ENCODE measurements at regions of chr10 and their contacts with region 1.

Region 1: GRCh38 chr10:79068562-79069324 is at the start of gene ZMIZ1:
- DNase-seq: peak; percentile 100
- ATAC-seq: peak; percentile 47
- H3K4me3 ChIP-seq: peak within 1 kb of the TSS; percentile 66
- H3K27ac ChIP-seq: peak within 1 kb of the TSS; percentile 3
- H3K4me1 ChIP-seq: peaks cover 34% of the 10 kb centered on the region
- H3K27me3 ChIP-seq: no peaks in the 10 kb centered on the region
- CTCF ChIP-seq: peak; percentile 57
- total RNA-seq, gene ZMIZ1: 55.4 and 84.2 TPM in 2 replicates

Region 2: GRCh38 chr10:78458983-78459638 is 609.6 kb before region 1 on chr10:
- CTCF ChIA-PET with region 1: no interaction called
- POLR2A ChIA-PET with region 1: no interaction called
- intact Hi-C with region 1: loop called (anchors 2 kb)
- DNase-seq: peak; percentile 100
- ATAC-seq: peak; percentile 91
- H3K4me3 ChIP-seq: peak overlapping the region; percentile 6; the same call in 1 of the 2 replicates
- H3K27ac ChIP-seq: peak overlapping the region; percentile 85
- H3K4me1 ChIP-seq: peaks cover 57% of the 10 kb centered on the region
- H3K27me3 ChIP-seq: no peaks in the 10 kb centered on the region
- CTCF ChIP-seq: no peak

Region 3: DNA sequence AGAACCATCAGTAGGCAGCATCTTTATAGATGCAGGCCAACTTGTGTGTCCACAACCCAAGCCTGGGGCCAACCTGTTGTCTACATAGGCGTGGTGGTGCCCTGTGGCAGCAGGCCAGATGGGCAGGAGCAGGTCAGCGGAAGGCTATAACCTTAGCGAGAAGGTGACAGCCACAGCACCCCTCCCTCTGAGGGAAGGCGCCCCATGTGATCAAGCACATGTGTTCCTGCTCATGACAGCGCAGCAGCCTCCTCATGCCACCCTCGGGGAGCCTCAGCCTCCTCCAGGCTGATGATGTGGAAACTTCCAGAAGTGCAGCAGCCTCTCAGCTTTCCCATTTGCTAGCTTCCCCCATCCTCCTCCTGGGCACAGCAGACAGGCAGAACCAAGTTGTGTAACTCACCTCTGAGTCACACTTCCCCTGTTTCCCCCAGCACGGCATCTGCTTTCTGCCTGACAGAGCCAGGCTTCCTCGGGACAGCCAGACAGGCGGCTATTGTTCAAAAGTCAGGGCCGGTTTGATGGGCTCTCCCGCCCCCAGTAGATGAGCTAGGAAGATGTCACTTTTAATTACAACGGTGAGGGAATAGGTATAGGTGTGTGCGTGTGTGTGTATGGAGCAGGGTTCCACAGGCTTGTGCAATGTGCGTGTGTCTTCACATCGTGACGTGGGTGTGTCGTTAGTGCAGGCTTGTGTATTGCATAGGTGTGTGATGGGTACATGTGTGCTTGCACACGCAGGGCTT is 312.0 kb before region 1 on chr10:
- CTCF ChIA-PET with region 1: interaction called, 3 read pairs
- POLR2A ChIA-PET with region 1: no interaction called
- intact Hi-C with region 1: loop called (anchors 1 kb)
- DNase-seq: peak; percentile 100
- ATAC-seq: peak; percentile 98
- H3K4me3 ChIP-seq: peak overlapping the region; percentile 4; the same call in 1 of the 2 replicates
- H3K27ac ChIP-seq: peak overlapping the region; percentile 73
- H3K4me1 ChIP-seq: peaks cover 28% of the 10 kb centered on the region
- H3K27me3 ChIP-seq: no peaks in the 10 kb centered on the region
- CTCF ChIP-seq: peak; percentile 39; the same call in 1 of the 2 replicates

Region 4: GRCh38 chr10:78944723-78945312 is 123.9 kb before region 1 on chr10:
- CTCF ChIA-PET with region 1: no interaction called
- POLR2A ChIA-PET with region 1: no interaction called
- intact Hi-C with region 1: no loop called
- DNase-seq: peak; percentile 77
- ATAC-seq: peak; percentile 53
- H3K4me3 ChIP-seq: no peak overlapping the region
- H3K27ac ChIP-seq: no peak overlapping the region
- H3K4me1 ChIP-seq: no peaks in the 10 kb centered on the region
- H3K27me3 ChIP-seq: no peaks in the 10 kb centered on the region
- CTCF ChIP-seq: no peak

Region 5: GRCh38 chr10:78972947-78973900 is 95.5 kb before region 1 on chr10:
- CTCF ChIA-PET with region 1: interaction called, 36 read pairs
- POLR2A ChIA-PET with region 1: interaction called, 17 read pairs
- intact Hi-C with region 1: loop called (anchors 1 kb)
- DNase-seq: peak; percentile 100
- ATAC-seq: peak; percentile 63
- H3K4me3 ChIP-seq: peak overlapping the region; percentile 60
- H3K27ac ChIP-seq: peak overlapping the region; percentile 79
- H3K4me1 ChIP-seq: peaks cover 39% of the 10 kb centered on the region
- H3K27me3 ChIP-seq: no peaks in the 10 kb centered on the region
- CTCF ChIP-seq: peak; percentile 20; the same call in 1 of the 2 replicates

Region 6: DNA sequence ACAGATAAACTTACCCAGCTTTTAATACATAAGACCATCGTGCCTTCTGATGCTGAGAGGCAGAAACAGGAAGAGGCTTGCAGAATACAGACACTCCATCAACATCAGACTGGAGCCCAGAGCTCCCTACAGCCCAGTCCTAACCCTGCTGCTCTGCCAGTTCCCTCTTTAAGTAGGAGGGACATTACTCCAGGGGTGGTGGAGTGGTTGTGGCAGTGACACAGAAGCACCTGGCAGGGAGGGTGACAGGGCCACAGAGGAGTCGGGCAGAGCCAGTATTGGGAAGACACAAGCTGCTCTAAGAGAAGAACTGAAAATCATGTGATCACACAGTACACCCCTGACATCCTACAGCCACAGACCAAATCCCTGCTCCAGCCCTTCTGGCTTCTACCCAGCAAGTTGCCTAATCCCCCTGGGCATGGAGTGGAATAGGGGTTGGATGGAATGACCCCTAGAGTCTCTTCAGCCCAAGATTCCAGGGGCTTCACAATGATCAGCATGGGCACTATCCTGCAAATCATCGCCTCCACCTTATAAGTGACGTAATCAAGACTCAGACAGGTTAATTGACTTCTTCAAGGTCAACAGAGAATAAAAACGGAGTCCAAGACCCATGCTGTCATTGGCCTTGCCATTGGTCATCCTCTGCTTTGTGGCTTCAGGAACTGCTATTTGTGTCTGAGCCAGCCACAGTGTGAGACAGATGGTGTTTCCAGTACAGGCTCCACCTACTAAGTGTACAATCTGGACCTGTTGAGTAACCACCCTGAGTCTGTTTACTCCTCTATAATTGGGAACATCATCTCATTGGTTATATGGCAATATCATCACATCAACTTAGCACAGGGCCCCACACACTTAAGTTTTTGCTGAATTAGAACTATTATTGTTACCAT is 61.1 kb before region 1 on chr10:
- CTCF ChIA-PET with region 1: no interaction called
- POLR2A ChIA-PET with region 1: no interaction called
- intact Hi-C with region 1: no loop called
- DNase-seq: no peak
- ATAC-seq: no peak
- H3K4me3 ChIP-seq: no peak overlapping the region
- H3K27ac ChIP-seq: no peak overlapping the region
- H3K4me1 ChIP-seq: no peaks in the 10 kb centered on the region
- H3K27me3 ChIP-seq: peaks cover 40% of the 10 kb centered on the region
- CTCF ChIP-seq: no peak

Region 7: DNA sequence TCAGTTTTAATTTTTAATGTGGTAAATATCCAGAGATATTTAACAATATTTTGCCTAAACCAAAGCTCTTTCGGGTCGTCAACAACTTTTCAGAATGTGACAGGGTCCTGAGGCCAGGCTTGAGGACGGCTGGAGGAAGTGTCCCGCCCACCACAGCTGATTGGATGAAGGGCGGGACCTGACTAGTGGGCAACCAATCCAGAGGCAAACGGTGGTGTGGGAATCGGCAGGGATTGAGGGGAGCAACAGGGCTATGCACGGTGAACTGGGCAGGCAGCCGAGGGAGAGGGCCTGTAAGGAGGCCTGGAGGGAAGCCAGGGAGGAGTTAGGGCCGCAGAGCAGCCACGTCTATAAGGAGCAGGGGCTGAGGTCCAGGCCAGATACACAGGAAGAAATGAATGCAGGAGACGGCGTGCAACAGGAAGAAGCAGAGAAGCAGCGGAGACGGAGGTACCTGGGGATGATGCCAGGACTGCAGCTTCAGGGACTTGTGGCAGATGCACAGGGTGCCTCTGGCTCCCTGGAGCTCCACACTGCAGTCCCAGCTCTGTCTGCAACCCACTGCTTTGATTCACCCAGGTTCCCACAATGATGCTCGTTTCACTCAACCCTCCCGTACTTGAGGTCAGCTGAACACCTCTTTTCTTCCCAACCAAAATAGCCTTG is 46.0 kb before region 1 on chr10:
- CTCF ChIA-PET with region 1: no interaction called
- POLR2A ChIA-PET with region 1: no interaction called
- intact Hi-C with region 1: no loop called
- DNase-seq: peak; percentile 63
- ATAC-seq: peak; percentile 46; the same call in 1 of the 2 replicates
- H3K4me3 ChIP-seq: no peak overlapping the region
- H3K27ac ChIP-seq: no peak overlapping the region
- H3K4me1 ChIP-seq: no peaks in the 10 kb centered on the region
- H3K27me3 ChIP-seq: no peaks in the 10 kb centered on the region
- CTCF ChIP-seq: no peak

Region 8: DNA sequence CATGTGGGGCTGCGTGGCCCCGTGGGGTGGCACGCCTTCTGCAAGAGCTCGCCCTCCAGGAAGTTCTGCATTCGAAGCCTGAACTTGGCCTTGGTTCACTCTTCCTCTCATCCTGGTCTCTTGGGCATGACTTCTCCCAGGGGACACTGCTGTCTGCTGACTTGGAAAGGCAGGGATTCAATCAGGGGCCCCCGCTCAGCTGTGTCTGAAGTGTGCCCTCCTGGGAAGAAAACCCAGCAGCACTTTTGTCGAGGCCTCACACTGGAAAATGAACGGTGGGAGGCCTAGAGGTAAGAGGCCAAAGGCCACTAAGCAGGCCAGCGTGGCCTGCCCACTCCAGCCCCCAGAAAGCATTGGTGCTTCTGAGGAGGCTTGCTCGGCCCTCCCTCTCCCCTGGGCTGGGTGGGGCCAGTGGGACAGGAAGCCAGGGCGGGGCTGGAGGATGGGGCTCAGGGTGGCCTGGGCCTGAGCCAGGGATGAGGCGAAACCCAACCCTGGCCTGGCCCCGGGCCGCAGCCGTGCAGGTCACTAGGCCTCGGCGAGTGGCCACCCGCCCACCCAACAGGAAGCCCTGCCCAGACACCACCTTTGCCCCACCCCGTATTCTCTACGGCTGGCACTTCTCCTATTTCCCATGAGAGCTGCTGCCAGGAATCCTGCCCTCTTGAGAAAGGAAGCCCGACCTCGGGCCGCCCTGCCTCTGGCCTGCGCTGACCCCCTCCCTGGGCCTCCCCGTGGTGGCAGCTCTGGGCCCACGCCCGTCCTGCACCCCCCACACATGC is 81.1 kb after region 1 on chr10:
- CTCF ChIA-PET with region 1: interaction called, 6 read pairs
- POLR2A ChIA-PET with region 1: interaction called, 4 read pairs
- intact Hi-C with region 1: loop called (anchors 1 kb)
- DNase-seq: peak; percentile 100
- ATAC-seq: peak; percentile 62
- H3K4me3 ChIP-seq: peak overlapping the region; percentile 2; the same call in 1 of the 2 replicates
- H3K27ac ChIP-seq: peak overlapping the region; percentile 77
- H3K4me1 ChIP-seq: peaks cover 67% of the 10 kb centered on the region
- H3K27me3 ChIP-seq: no peaks in the 10 kb centered on the region
- CTCF ChIP-seq: no peak

Region 9: DNA sequence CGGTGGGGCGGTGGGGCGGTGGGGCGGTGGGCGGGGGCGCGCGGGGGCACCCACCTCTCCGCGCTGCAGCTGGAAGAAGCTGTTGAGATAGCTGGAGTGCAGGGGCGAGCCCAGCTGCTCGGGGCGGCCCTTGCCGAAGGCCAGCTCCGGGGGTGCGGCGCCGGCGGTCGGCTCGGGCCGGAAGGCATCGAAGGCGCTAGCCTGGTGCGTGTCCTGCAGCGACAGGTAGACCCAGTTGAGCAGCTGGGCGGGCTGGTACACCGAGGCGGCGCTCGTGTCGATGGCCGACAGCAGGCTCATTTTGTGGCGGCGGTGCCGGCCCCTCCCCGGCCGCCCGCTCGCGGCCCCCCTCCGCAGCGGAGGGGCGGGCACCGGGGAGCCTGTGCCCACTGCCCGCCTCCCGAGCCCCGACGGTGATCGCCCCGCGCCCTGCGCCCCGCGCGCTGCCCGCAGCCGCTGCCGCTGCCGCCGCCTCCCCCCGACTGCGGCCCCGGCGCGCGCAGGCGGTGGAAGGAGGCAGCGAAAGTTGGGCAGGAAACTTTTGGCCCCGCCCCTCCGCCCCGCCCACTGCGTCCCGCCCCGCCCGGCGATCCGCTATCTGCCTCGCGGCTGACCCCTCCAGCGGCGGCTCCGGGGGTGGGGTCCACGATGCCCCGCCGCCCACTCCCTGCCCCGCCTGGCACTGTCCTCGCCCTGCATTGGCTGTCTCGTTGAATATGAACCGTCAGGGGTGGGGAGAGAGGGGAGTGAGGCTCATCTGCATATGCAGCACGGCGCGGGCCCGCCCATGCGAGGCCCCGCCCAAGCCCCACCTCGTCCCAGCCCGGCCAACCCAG is 376.6 kb after region 1 on chr10 and contains the start of gene ZCCHC24:
- CTCF ChIA-PET with region 1: no interaction called
- POLR2A ChIA-PET with region 1: no interaction called
- intact Hi-C with region 1: loop called (anchors 10 kb)
- DNase-seq: peak; percentile 100
- ATAC-seq: peak; percentile 78
- H3K4me3 ChIP-seq: peak within 1 kb of the TSS; percentile 70
- H3K27ac ChIP-seq: peak within 1 kb of the TSS; percentile 15
- H3K4me1 ChIP-seq: peaks cover 59% of the 10 kb centered on the region
- H3K27me3 ChIP-seq: no peaks in the 10 kb centered on the region
- CTCF ChIP-seq: no peak
- total RNA-seq, gene ZCCHC24: 32.9 and 40.7 TPM in 2 replicates